Left lung (tissue), 14 donors: ENCODE measurements at regions of chr3 and their contacts with region 1.

Region 1: GRCh38 chr3:77038468-77038929 is 1.4 kb upstream of the ROBO2 start:
- DNase-seq: peak; percentile 58 to 93 (median 72)
- ATAC-seq: peak; percentile 93
- H3K4me3 ChIP-seq: peak overlapping the region; percentile 34 to 46
- H3K27ac ChIP-seq: peak overlapping the region in 1 of 2 donors; percentile 50
- H3K4me1 ChIP-seq: peaks cover 0 to 10% of the 10 kb centered on the region in 2 donors
- H3K27me3 ChIP-seq: peaks cover 33 to 57% of the 10 kb centered on the region in 2 donors
- CTCF ChIP-seq: peak; percentile 38 to 51

Region 2: GRCh38 chr3:76976996-76977395 is 61.5 kb before region 1 on chr3:
- intact Hi-C with region 1: no loop called
- DNase-seq: no peak
- ATAC-seq: no peak
- H3K4me3 ChIP-seq: no peak overlapping the region
- H3K27ac ChIP-seq: no peak overlapping the region
- H3K4me1 ChIP-seq: no peaks in the 10 kb centered on the region
- H3K27me3 ChIP-seq: no peaks in the 10 kb centered on the region
- CTCF ChIP-seq: no peak

Region 3: DNA sequence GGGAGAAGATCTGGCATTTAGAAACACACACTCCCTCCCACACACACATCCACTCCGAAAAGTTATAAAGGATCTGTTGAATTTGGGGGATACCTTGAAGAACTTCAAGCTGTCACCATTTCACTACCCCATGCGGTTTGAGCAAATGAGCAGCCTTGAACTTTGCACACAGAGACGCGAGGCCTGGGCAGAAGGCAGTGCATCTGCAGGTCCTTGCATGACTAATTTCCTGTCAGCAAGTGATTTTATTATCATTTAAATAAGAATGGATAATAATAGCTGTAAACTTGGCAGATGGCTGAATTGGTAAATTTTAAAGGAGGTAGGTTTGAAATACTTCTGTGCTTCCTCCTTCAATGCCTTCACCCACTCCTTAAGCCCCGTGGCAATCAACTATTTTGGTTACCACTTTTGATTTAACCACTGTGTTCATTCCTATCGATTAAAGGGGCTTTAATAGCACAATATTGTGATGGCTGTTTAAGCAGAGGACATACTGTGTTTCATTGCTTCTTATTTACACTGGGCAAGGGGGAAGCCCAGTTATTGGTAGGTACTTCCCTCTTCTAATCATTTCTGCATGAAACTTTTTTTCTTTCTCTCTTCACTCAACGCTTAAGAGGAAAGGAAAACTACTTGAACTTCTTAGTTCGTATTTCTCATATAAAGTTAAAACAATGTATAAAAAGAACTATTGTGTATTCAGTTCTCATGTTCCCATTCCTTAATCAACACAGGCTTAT is 109.5 kb after region 1 on chr3:
- intact Hi-C with region 1: no loop called
- DNase-seq: no peak
- ATAC-seq: no peak
- H3K4me3 ChIP-seq: no peak overlapping the region
- H3K27ac ChIP-seq: no peak overlapping the region
- H3K4me1 ChIP-seq: no peaks in the 10 kb centered on the region
- H3K27me3 ChIP-seq: no peaks in the 10 kb centered on the region
- CTCF ChIP-seq: no peak

Region 4: GRCh38 chr3:77254967-77255831 is 216.7 kb after region 1 on chr3:
- intact Hi-C with region 1: loop called in 1 of 2 experiments (anchors 2 kb)
- DNase-seq: peak in 2 of 4 donors; percentile 35 to 68
- ATAC-seq: peak; percentile 91
- H3K4me3 ChIP-seq: no peak overlapping the region
- H3K27ac ChIP-seq: no peak overlapping the region
- H3K4me1 ChIP-seq: no peaks in the 10 kb centered on the region
- H3K27me3 ChIP-seq: no peaks in the 10 kb centered on the region
- CTCF ChIP-seq: peak; percentile 45 to 70